ENCODE measurements at regions of chr12 and their contacts with region 1.

Region 1: GRCh38 chr12:52879394-52880351 is 25.2 kb downstream of the KRT8 start:
- DNase-seq: peak; percentile 47 to 53
- ATAC-seq: peak; percentile 83 to 89
- H3K4me3 ChIP-seq: peak overlapping the region in 2 of 4 donors; percentile 21 to 35
- H3K27ac ChIP-seq: no peak overlapping the region
- H3K4me1 ChIP-seq: peaks cover 2 to 8% of the 10 kb centered on the region in 2 donors
- H3K27me3 ChIP-seq: peaks cover 0 to 4% (median 3%) of the 10 kb centered on the region in 3 donors
- CTCF ChIP-seq: peak; percentile 63 to 73 (median 65)
- POLR2A ChIP-seq: no peak

Region 2: GRCh38 chr12:52362118-52362726 is 517.5 kb before region 1 on chr12:
- in situ Hi-C with region 1: loop called in 1 of 4 experiments (anchors 10 kb)
- intact Hi-C with region 1: no loop called
- DNase-seq: no peak
- ATAC-seq: no peak
- H3K4me3 ChIP-seq: no peak overlapping the region
- H3K27ac ChIP-seq: no peak overlapping the region
- H3K4me1 ChIP-seq: no peaks in the 10 kb centered on the region
- H3K27me3 ChIP-seq: peaks cover 0 to 2% (median 0%) of the 10 kb centered on the region in 3 donors
- CTCF ChIP-seq: no peak
- POLR2A ChIP-seq: no peak

Region 3: GRCh38 chr12:52582971-52583456 is 296.7 kb before region 1 on chr12:
- in situ Hi-C with region 1: loop called in 1 of 4 experiments (anchors 25 kb)
- intact Hi-C with region 1: loop called (anchors 5 kb)
- DNase-seq: peak in 1 of 2 donors; percentile 11
- ATAC-seq: peak in 1 of 2 donors; percentile 62
- H3K4me3 ChIP-seq: no peak overlapping the region
- H3K27ac ChIP-seq: no peak overlapping the region
- H3K4me1 ChIP-seq: no peaks in the 10 kb centered on the region
- H3K27me3 ChIP-seq: no peaks in the 10 kb centered on the region
- CTCF ChIP-seq: peak in 3 of 5 experiments; percentile 31 to 47 (median 39)
- POLR2A ChIP-seq: no peak

Region 4: GRCh38 chr12:52980693-52981423 is 101.2 kb after region 1 on chr12:
- in situ Hi-C with region 1: loop called in 2 of 4 experiments (anchors 5 to 10 kb)
- intact Hi-C with region 1: no loop called
- DNase-seq: peak; percentile 70 to 78
- ATAC-seq: peak; percentile 96 to 98
- H3K4me3 ChIP-seq: no peak overlapping the region
- H3K27ac ChIP-seq: no peak overlapping the region
- H3K4me1 ChIP-seq: no peaks in the 10 kb centered on the region
- H3K27me3 ChIP-seq: peaks cover 0 to 5% (median 4%) of the 10 kb centered on the region in 3 donors
- CTCF ChIP-seq: peak; percentile 82 to 89 (median 87)
- POLR2A ChIP-seq: no peak

Measured in gastrocnemius medialis (tissue), 4 donors.